Caco-2 (cell line): ENCODE measurements at regions of chr12 and their contacts with region 1.

Region 1: GRCh38 chr12:25958428-25959070 is at the start of gene RASSF8:
- DNase-seq: peak; percentile 65 to 93
- H3K4me3 ChIP-seq: peak within 1 kb of the TSS; percentile 66
- H3K4me3 Mint-ChIP-seq: peak within 1 kb of the TSS; percentile 89
- H3K27ac Mint-ChIP-seq: peak within 1 kb of the TSS; percentile 84
- H3K4me1 ChIP-seq: 0 out of 2 replicates have a peak, but pooled peaks cover 6% of the 10 kb centered on the region
- H3K4me1 Mint-ChIP-seq: peaks cover 8% of the 10 kb centered on the region
- H3K27me3 ChIP-seq: no peaks in the 10 kb centered on the region
- H3K27me3 Mint-ChIP-seq: no peaks in the 10 kb centered on the region
- CTCF ChIP-seq: peak in 1 of 2 experiments; percentile 40
- total RNA-seq, gene RASSF8: 140 and 143 TPM in 2 replicates

Region 2: GRCh38 chr12:25875666-25876065 is 82.9 kb before region 1 on chr12:
- CTCF ChIA-PET with region 1: no interaction called
- POLR2A ChIA-PET with region 1: no interaction called
- intact Hi-C with region 1: loop called (anchors 5 kb)
- DNase-seq: peak; percentile 82 to 84
- H3K4me3 ChIP-seq: no peak overlapping the region
- H3K4me3 Mint-ChIP-seq: peak overlapping the region; percentile 49
- H3K27ac Mint-ChIP-seq: peak overlapping the region; percentile 96
- H3K4me1 ChIP-seq: peaks cover 57% of the 10 kb centered on the region
- H3K4me1 Mint-ChIP-seq: peaks cover 56% of the 10 kb centered on the region
- H3K27me3 ChIP-seq: no peaks in the 10 kb centered on the region
- H3K27me3 Mint-ChIP-seq: no peaks in the 10 kb centered on the region
- CTCF ChIP-seq: no peak

Region 3: GRCh38 chr12:25997201-25997963 is 38.8 kb after region 1 on chr12:
- CTCF ChIA-PET with region 1: no interaction called
- POLR2A ChIA-PET with region 1: no interaction called
- intact Hi-C with region 1: loop called (anchors 2 kb)
- DNase-seq: peak in 1 of 2 experiments; percentile 46
- H3K4me3 ChIP-seq: no peak overlapping the region
- H3K4me3 Mint-ChIP-seq: no peak overlapping the region
- H3K27ac Mint-ChIP-seq: peak overlapping the region; percentile 50
- H3K4me1 ChIP-seq: peaks cover 15% of the 10 kb centered on the region
- H3K4me1 Mint-ChIP-seq: peaks cover 45% of the 10 kb centered on the region
- H3K27me3 ChIP-seq: no peaks in the 10 kb centered on the region
- H3K27me3 Mint-ChIP-seq: no peaks in the 10 kb centered on the region
- CTCF ChIP-seq: no peak

Region 4: DNA sequence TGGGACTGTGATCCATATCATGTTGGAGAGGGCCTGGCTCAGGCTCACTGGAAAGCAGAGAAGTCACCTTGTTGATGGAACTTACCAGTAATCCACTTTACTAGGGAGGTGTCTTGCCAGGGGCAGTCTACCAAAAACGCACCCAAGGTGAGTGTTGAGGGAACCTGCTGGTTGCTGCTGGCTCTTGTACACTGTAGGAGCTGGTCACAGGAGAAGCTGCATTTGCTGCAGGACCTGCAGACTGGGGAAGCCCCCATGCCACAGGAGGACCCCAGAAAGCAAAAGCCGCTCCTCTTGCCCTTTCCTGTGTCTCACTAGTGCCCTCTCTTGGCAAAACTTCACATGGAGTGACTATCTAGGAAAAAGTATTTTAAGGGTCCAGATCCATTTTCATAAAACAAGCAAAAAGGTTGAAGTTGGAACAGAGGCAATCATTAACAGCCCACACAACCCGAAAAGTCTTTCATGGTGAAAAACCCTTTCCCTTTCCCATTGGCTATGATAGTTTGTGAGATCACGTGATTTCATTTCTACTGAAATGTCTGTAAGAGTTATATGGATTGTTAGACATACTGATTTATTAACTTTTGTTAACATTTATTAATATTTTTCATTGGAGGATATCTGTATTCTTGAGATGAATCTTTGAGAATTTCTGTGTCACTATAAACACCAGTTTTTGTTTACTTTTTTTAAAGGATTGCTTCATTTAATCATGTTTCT is 59.1 kb after region 1 on chr12:
- CTCF ChIA-PET with region 1: no interaction called
- POLR2A ChIA-PET with region 1: no interaction called
- intact Hi-C with region 1: loop called (anchors 1 kb)
- DNase-seq: peak; percentile 52 to 74
- H3K4me3 ChIP-seq: no peak overlapping the region
- H3K4me3 Mint-ChIP-seq: no peak overlapping the region
- H3K27ac Mint-ChIP-seq: no peak overlapping the region
- H3K4me1 ChIP-seq: no peaks in the 10 kb centered on the region
- H3K4me1 Mint-ChIP-seq: peaks cover 16% of the 10 kb centered on the region
- H3K27me3 ChIP-seq: no peaks in the 10 kb centered on the region
- H3K27me3 Mint-ChIP-seq: no peaks in the 10 kb centered on the region
- CTCF ChIP-seq: peak; percentile 75 to 90

Region 5: GRCh38 chr12:26091822-26092221 is 133.3 kb after region 1 on chr12:
- CTCF ChIA-PET with region 1: no interaction called
- POLR2A ChIA-PET with region 1: no interaction called
- intact Hi-C with region 1: loop called (anchors 5 kb)
- DNase-seq: peak in 1 of 2 experiments; percentile 42
- H3K4me3 ChIP-seq: no peak overlapping the region
- H3K4me3 Mint-ChIP-seq: peak overlapping the region; percentile 7
- H3K27ac Mint-ChIP-seq: peak overlapping the region; percentile 84
- H3K4me1 ChIP-seq: peaks cover 61% of the 10 kb centered on the region
- H3K4me1 Mint-ChIP-seq: peaks cover 45% of the 10 kb centered on the region
- H3K27me3 ChIP-seq: no peaks in the 10 kb centered on the region
- H3K27me3 Mint-ChIP-seq: no peaks in the 10 kb centered on the region
- CTCF ChIP-seq: peak; percentile 30 to 34